Activated CD8-positive, alpha-beta memory T cell treated with anti-CD3 and anti-CD28 coated beads, Interleukin-2, amount 10 ng/mL, durations not matched to agents 7 days and 5 days (primary cell): ENCODE measurements at regions of chr16 and their contacts with region 1.

Region 1: GRCh38 chr16:29784901-29785500 is 5.5 kb upstream of the KIF22 start:
- DNase-seq: peak; percentile 84
- ATAC-seq: peak; percentile 94
- H3K4me3 Mint-ChIP-seq: peak overlapping the region; percentile 55
- H3K27ac Mint-ChIP-seq: peak overlapping the region; percentile 73
- H3K4me1 Mint-ChIP-seq: peaks cover 26% of the 10 kb centered on the region
- H3K27me3 Mint-ChIP-seq: peaks cover 7% of the 10 kb centered on the region

Region 2: GRCh38 chr16:29729116-29729521 is 55.9 kb before region 1 on chr16:
- CTCF ChIA-PET with region 1: interaction called, 11 read pairs
- DNase-seq: no peak
- ATAC-seq: no peak
- H3K4me3 Mint-ChIP-seq: no peak overlapping the region
- H3K27ac Mint-ChIP-seq: no peak overlapping the region
- H3K4me1 Mint-ChIP-seq: peaks cover 34% of the 10 kb centered on the region
- H3K27me3 Mint-ChIP-seq: peaks cover 13% of the 10 kb centered on the region

Region 3: DNA sequence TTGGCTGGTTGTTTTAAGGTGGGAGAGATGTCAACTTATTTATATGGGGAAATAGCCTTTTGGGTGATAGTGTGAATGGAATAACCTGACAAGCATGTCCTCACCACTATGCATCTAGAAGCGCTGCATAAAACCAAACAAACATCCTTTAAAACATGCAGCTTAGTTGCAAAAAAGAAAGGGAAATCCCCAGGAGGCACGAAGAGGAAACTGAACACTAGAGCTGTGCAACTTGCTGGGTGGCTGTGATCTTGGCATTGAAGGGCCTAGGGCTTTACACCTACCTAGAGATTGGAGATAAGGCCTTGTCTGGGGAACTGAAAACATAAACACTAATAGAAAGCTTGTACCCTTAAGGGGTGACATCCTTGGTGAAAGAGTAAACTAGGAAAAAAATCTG is 46.5 kb before region 1 on chr16:
- CTCF ChIA-PET with region 1: interaction called, 18 read pairs
- DNase-seq: peak; percentile 67
- ATAC-seq: peak; percentile 90
- H3K4me3 Mint-ChIP-seq: peak overlapping the region; percentile 14
- H3K27ac Mint-ChIP-seq: peak overlapping the region; percentile 89
- H3K4me1 Mint-ChIP-seq: peaks cover 56% of the 10 kb centered on the region
- H3K27me3 Mint-ChIP-seq: no peaks in the 10 kb centered on the region

Region 4: GRCh38 chr16:29745853-29746345 is 39.1 kb before region 1 on chr16 and contains the start of gene C16orf54:
- CTCF ChIA-PET with region 1: interaction called, 11 read pairs
- DNase-seq: peak; percentile 98
- ATAC-seq: peak; percentile 89
- H3K4me3 Mint-ChIP-seq: peak within 1 kb of the TSS; percentile 99
- H3K27ac Mint-ChIP-seq: peak within 1 kb of the TSS; percentile 98
- H3K4me1 Mint-ChIP-seq: peaks cover 55% of the 10 kb centered on the region
- H3K27me3 Mint-ChIP-seq: peaks cover 3% of the 10 kb centered on the region
- total RNA-seq, gene C16orf54: 39.7 to 51.2 TPM

Region 5: GRCh38 chr16:29757950-29758466 is 27.0 kb before region 1 on chr16:
- CTCF ChIA-PET with region 1: interaction called, 24 read pairs
- DNase-seq: no peak
- ATAC-seq: no peak
- H3K4me3 Mint-ChIP-seq: no peak overlapping the region
- H3K27ac Mint-ChIP-seq: no peak overlapping the region
- H3K4me1 Mint-ChIP-seq: peaks cover 14% of the 10 kb centered on the region
- H3K27me3 Mint-ChIP-seq: peaks cover 2% of the 10 kb centered on the region

Region 6: GRCh38 chr16:29815793-29816693 is 31.0 kb after region 1 on chr16 and contains the start of gene PAGR1:
- CTCF ChIA-PET with region 1: interaction called, 34 read pairs
- DNase-seq: peak; percentile 99
- ATAC-seq: peak; percentile 79
- H3K4me3 Mint-ChIP-seq: peak within 1 kb of the TSS; percentile 99
- H3K27ac Mint-ChIP-seq: peak within 1 kb of the TSS; percentile 88
- H3K4me1 Mint-ChIP-seq: peaks cover 65% of the 10 kb centered on the region
- H3K27me3 Mint-ChIP-seq: peaks cover 12% of the 10 kb centered on the region
- total RNA-seq, gene PAGR1: 34.3 to 35.2 TPM

Region 7: GRCh38 chr16:29900102-29900887 is 115.3 kb after region 1 on chr16 and contains the start of gene ASPHD1:
- CTCF ChIA-PET with region 1: no interaction called
- DNase-seq: peak; percentile 69
- ATAC-seq: peak; percentile 91
- H3K4me3 Mint-ChIP-seq: peak within 1 kb of the TSS; percentile 66
- H3K27ac Mint-ChIP-seq: no peak within 1 kb of the TSS
- H3K4me1 Mint-ChIP-seq: peaks cover 6% of the 10 kb centered on the region
- H3K27me3 Mint-ChIP-seq: peaks cover 18% of the 10 kb centered on the region
- total RNA-seq, gene ASPHD1: 0.33 TPM in 1 of 2 experiments, not detected in the other

Region 8: DNA sequence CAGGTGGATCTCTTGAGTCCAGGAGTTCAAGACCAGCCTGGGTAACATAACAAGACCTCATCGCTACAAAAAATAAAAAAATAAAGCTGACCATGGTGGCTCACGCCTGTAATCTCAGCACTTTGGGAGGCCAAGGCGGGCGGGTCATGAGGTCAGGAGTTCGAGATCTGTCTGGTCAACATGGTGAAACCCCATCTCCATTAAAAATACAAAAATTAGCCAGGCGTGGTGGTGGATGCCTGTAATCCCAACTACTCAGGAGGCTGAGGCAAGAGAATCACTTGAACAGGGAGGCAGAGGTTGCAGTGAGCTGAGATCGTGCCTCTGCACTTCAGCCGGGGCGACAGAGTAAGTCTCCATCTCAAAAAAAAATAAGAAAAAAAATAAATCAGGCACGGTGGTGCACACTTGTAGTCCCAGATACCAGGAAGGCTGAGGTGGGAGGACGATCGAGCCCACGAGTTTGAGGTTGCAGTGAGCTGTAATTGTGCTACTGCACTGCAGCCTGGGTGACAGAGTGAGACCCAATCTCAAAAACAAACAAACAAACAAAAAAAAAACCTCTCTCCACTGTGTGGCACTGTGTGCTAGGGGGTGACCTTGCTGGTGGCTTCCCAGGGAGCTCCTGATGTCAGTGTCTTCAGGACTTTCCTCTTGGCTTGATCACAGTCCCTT is 357.8 kb after region 1 on chr16:
- CTCF ChIA-PET with region 1: no interaction called
- DNase-seq: peak; percentile 58
- ATAC-seq: peak; percentile 96
- H3K4me3 Mint-ChIP-seq: no peak overlapping the region
- H3K27ac Mint-ChIP-seq: peak overlapping the region; percentile 47
- H3K4me1 Mint-ChIP-seq: peaks cover 31% of the 10 kb centered on the region
- H3K27me3 Mint-ChIP-seq: no peaks in the 10 kb centered on the region